MCF 10A (cell line): ENCODE measurements at regions of chr2 and their contacts with region 1.

Region 1: DNA sequence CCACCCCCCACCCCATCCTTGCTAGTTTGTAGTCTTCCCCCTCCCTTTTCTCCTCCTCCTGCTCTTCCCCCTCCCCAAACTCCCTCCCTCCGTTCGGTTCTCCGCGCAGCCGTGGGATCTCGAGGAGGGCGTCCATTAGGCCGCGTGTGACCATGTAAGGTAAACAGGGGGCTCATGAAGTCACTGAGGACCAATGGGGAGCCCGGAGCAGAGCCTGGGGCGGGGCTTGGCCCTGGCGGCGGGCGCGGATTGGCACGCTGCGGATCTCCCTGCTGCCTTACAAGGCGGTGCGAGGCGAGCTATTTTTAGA is 246 bp upstream of the KLF7 start:
- DNase-seq: peak; percentile 99
- H3K4me3 Mint-ChIP-seq: peak overlapping the region; percentile 90
- H3K27ac Mint-ChIP-seq: peak overlapping the region; percentile 99
- H3K4me1 Mint-ChIP-seq: peaks cover 44% of the 10 kb centered on the region
- H3K27me3 Mint-ChIP-seq: no peaks in the 10 kb centered on the region
- CTCF ChIP-seq: no peak

Region 2: DNA sequence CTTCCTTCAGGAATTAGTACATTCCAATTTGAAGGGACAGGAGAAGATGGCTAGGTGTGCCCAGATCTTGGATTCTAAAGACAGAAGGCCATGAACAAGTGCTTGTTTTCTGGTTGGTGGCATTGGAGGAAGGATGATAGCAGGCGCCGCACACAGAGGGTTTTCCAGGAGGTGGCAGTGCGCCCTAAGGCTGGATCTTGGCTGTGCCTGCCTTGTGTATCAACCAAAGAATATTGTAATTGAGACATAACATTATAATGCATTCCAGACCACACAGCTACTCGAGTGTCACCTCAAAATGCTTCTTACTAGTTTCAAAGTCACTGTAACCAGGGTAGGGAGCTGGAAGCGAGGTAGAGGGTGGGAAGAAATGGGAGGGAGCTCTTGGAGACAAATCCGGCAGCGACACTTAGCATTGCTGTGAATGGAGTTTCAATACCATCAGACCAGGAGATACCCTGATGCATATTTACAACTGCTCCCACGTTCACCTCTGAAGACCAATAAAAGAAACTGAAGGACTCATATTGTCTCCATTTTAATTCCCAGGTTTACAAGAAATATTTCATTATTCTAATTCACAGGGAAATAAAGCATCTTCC is 184.2 kb before region 1 on chr2:
- CTCF ChIA-PET with region 1: interaction called, 10 read pairs
- POLR2A ChIA-PET with region 1: interaction called, 6 read pairs
- intact Hi-C with region 1: loop called (anchors 1 kb)
- DNase-seq: peak; percentile 76
- H3K4me3 Mint-ChIP-seq: no peak overlapping the region
- H3K27ac Mint-ChIP-seq: no peak overlapping the region
- H3K4me1 Mint-ChIP-seq: peaks cover 22% of the 10 kb centered on the region
- H3K27me3 Mint-ChIP-seq: no peaks in the 10 kb centered on the region
- CTCF ChIP-seq: peak; percentile 88

Region 3: GRCh38 chr2:207083361-207084110 is 82.5 kb before region 1 on chr2:
- CTCF ChIA-PET with region 1: no interaction called
- POLR2A ChIA-PET with region 1: no interaction called
- intact Hi-C with region 1: no loop called
- DNase-seq: no peak
- H3K4me3 Mint-ChIP-seq: no peak overlapping the region
- H3K27ac Mint-ChIP-seq: no peak overlapping the region
- H3K4me1 Mint-ChIP-seq: no peaks in the 10 kb centered on the region
- H3K27me3 Mint-ChIP-seq: no peaks in the 10 kb centered on the region
- CTCF ChIP-seq: no peak

Region 4: GRCh38 chr2:207133820-207134519 is 32.0 kb before region 1 on chr2:
- CTCF ChIA-PET with region 1: interaction called, 3 read pairs
- POLR2A ChIA-PET with region 1: interaction called, 61 read pairs
- intact Hi-C with region 1: no loop called
- DNase-seq: peak; percentile 81
- H3K4me3 Mint-ChIP-seq: peak overlapping the region; percentile 59
- H3K27ac Mint-ChIP-seq: peak overlapping the region; percentile 78
- H3K4me1 Mint-ChIP-seq: peaks cover 57% of the 10 kb centered on the region
- H3K27me3 Mint-ChIP-seq: no peaks in the 10 kb centered on the region
- CTCF ChIP-seq: no peak

Region 5: DNA sequence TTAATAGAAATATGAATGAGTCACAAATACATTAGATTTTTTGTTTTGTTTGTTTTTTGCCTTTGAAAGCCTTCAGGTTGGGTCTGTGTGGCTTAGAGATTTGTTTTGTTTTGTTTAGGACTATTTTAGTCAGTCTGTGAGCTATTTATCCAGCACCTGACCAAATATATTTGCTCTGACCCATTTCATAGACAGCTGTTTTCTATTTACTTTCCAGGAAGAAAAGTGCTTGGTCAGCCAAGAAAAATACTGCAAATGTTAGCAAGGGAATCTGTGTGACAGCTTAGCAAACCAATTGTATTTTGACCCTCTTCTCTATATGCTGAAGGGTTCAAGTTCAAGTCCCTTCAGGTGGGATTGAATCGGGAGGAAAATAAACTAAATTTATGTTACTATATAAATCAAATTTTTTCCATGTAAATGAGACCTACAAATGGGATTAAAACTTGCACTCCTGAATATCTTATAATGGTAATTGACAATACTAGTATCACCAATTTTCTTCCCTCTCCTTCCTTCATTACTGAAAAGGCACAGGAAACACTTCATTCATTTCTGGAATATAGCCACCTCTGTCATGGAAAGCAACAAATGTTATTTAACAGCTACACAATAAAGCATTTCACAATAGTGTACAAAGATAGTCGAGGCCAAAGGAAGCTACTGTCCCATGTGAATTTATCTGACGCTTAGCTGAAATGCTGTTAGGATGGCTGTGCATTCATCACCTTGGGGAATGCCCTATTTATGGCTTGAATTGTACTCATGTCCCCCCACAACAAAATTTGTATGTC is 22.8 kb after region 1 on chr2:
- CTCF ChIA-PET with region 1: interaction called, 3 read pairs
- POLR2A ChIA-PET with region 1: interaction called, 11 read pairs
- intact Hi-C with region 1: no loop called
- DNase-seq: peak; percentile 51
- H3K4me3 Mint-ChIP-seq: no peak overlapping the region
- H3K27ac Mint-ChIP-seq: no peak overlapping the region
- H3K4me1 Mint-ChIP-seq: peaks cover 15% of the 10 kb centered on the region
- H3K27me3 Mint-ChIP-seq: no peaks in the 10 kb centered on the region
- CTCF ChIP-seq: no peak

Region 6: DNA sequence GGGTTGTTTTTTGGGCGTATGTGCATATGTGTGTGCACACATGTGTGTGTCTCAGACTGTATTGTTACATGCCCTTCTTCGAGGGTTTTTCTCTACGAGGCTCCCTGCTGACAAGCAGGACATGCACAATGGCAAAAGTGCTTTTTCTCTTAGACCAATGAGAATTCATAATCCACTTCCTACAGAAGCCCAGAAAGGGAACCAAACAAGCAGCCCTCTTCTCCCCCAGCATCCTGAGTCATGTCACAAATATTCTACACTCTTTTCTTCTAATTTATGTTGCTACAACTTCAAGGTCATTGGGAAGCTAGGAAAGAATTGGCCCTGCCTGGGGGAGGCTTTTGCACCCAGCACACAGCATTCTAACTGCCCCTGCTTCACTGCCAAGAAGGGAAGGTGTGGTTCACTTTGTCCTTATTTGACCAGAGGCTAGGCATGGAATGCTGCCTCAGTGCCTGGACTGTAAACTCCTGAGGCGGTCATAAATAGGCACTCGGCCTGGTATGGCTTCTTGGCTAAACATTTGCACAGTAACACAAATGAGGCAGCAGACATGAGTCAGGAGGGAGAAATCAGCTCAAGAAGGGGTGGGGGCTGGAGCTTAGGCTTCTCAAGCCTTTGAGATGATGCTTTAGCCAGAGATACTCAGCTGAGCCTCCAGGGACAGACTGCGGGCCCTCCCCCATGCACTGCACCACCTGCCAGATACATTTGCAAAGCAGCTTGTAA is 92.4 kb after region 1 on chr2:
- CTCF ChIA-PET with region 1: interaction called, 3 read pairs
- POLR2A ChIA-PET with region 1: interaction called, 158 read pairs
- intact Hi-C with region 1: loop called (anchors 1 kb)
- DNase-seq: peak; percentile 91
- H3K4me3 Mint-ChIP-seq: peak overlapping the region; percentile 26
- H3K27ac Mint-ChIP-seq: peak overlapping the region; percentile 84
- H3K4me1 Mint-ChIP-seq: peaks cover 65% of the 10 kb centered on the region
- H3K27me3 Mint-ChIP-seq: no peaks in the 10 kb centered on the region
- CTCF ChIP-seq: no peak

Region 7: GRCh38 chr2:207408086-207408794 is 242.2 kb after region 1 on chr2:
- CTCF ChIA-PET with region 1: interaction called, 4 read pairs
- POLR2A ChIA-PET with region 1: interaction called, 11 read pairs
- intact Hi-C with region 1: no loop called
- DNase-seq: peak; percentile 95
- H3K4me3 Mint-ChIP-seq: no peak overlapping the region
- H3K27ac Mint-ChIP-seq: no peak overlapping the region
- H3K4me1 Mint-ChIP-seq: peaks cover 21% of the 10 kb centered on the region
- H3K27me3 Mint-ChIP-seq: no peaks in the 10 kb centered on the region
- CTCF ChIP-seq: no peak